ENCODE measurements at regions of chr10 and their contacts with region 1.

Region 1: DNA sequence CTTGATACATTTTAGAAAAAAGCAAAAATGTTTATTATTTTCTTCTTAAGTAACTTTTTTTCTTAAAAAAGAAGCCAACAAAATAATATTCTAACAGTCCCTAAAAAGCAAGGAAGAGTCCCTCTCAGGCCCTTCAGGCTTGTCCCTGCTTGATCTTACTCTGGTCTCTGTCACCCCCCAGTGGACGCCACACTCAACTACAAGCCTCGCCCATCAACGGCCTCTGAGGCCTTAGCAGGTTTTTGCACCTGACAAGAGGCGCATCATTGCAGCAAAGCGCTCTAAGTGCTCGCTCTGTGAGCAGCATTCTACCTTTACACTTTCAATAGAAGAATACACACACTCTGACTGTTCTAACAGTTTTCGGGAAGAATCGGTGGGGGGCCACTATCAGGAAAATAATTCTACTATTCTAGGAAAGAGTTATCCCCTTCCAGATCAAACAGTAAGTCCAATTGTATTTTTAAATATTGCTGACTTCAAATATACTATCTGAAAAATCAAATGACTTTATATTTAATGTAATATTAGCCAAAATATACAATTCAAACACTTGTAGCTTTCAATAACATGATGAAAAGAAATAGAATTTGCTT is 139.2 kb downstream of the USP6NL start:
- DNase-seq: no peak
- ATAC-seq: peak; percentile 81
- H3K4me3 ChIP-seq: no peak overlapping the region
- H3K27ac ChIP-seq: no peak overlapping the region
- H3K4me1 ChIP-seq: no peaks in the 10 kb centered on the region
- H3K27me3 ChIP-seq: no peaks in the 10 kb centered on the region

Region 2: GRCh38 chr10:11424456-11425297 is 47.6 kb before region 1 on chr10:
- intact Hi-C with region 1: loop called in 1 of 2 experiments (anchors 2 kb)
- DNase-seq: no peak
- ATAC-seq: no peak
- H3K4me3 ChIP-seq: no peak overlapping the region
- H3K27ac ChIP-seq: no peak overlapping the region
- H3K4me1 ChIP-seq: no peaks in the 10 kb centered on the region
- H3K27me3 ChIP-seq: no peaks in the 10 kb centered on the region

Measured in aorta (tissue), 5 donors.